Activated B cell treated with CpG ODN at 0.5 μM for 24 hours (primary cell): ENCODE measurements at regions of chr5 and their contacts with region 1.

Region 1: DNA sequence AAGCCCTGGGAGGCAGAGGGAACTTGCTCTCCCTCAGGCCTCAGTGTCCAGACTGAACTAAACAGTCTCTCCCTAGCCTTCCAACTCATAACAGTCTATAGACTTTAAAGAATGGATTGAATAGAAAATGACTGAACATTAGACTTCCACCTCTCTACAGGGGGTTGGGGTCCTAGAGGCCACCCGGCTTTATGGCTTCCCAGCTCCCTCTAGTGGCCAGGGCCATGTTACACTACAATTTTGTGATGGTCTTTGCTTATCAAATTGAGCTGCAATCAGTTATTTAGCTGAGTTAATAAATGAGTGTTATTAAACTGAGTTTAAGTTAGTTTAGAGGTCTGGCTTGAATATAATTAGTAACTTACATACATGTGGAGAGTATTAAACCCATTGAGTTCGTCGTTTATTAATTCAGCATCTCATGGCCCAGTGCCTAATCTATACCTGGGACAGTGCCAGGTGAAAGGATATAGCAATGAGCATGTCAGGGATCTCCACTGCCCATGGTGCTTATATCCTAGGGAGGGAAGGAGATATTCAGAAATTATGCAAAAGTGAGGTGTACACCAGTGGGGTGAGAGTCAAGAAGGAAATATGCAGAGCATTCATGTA is 105.2 kb downstream of the SH3TC2 start:
- DNase-seq: peak; percentile 27
- ATAC-seq: peak; percentile 66
- H3K4me3 Mint-ChIP-seq: no peak overlapping the region
- H3K27ac Mint-ChIP-seq: no peak overlapping the region
- H3K4me1 Mint-ChIP-seq: no peaks in the 10 kb centered on the region
- H3K27me3 Mint-ChIP-seq: peaks cover 2% of the 10 kb centered on the region
- CTCF ChIP-seq: no peak

Region 2: DNA sequence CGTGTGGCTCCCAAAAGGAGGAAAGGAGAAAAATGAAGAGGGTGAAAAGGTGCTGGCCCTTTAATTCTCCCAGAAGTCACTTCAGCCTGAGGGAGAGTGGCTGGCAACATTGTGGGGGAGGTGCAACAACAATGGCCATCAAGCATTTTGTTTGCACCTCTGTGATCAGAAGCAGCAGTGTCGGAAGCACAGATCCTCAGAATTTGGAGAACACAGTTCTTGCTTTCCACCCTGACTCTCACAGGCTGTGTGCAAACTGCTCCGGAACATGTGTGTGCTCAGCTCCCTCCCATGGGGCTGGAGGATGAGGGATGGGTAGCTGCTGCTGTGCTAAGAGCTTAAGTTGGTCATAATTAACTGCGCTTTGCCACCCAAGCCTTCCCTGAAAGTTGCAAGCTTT is 1574.9 kb before region 1 on chr5:
- CTCF ChIA-PET with region 1: no interaction called
- POLR2A ChIA-PET with region 1: no interaction called
- intact Hi-C with region 1: no loop called
- DNase-seq: no peak
- ATAC-seq: no peak
- H3K4me3 Mint-ChIP-seq: no peak overlapping the region
- H3K27ac Mint-ChIP-seq: no peak overlapping the region
- H3K4me1 Mint-ChIP-seq: no peaks in the 10 kb centered on the region
- H3K27me3 Mint-ChIP-seq: no peaks in the 10 kb centered on the region
- CTCF ChIP-seq: no peak

Region 3: GRCh38 chr5:148740966-148741742 is 216.5 kb before region 1 on chr5:
- CTCF ChIA-PET with region 1: interaction called, 548 read pairs
- POLR2A ChIA-PET with region 1: interaction called, 3 read pairs
- intact Hi-C with region 1: loop called (anchors 1 kb)
- DNase-seq: no peak
- ATAC-seq: no peak
- H3K4me3 Mint-ChIP-seq: no peak overlapping the region
- H3K27ac Mint-ChIP-seq: no peak overlapping the region
- H3K4me1 Mint-ChIP-seq: peaks cover 10% of the 10 kb centered on the region
- H3K27me3 Mint-ChIP-seq: no peaks in the 10 kb centered on the region
- CTCF ChIP-seq: peak; percentile 55

Region 4: GRCh38 chr5:148805326-148806290 is 152.1 kb before region 1 on chr5:
- CTCF ChIA-PET with region 1: interaction called, 10 read pairs
- POLR2A ChIA-PET with region 1: no interaction called
- intact Hi-C with region 1: loop called (anchors 5 kb)
- DNase-seq: no peak
- ATAC-seq: peak; percentile 28
- H3K4me3 Mint-ChIP-seq: peak overlapping the region; percentile 47
- H3K27ac Mint-ChIP-seq: peak overlapping the region; percentile 88
- H3K4me1 Mint-ChIP-seq: peaks cover 66% of the 10 kb centered on the region
- H3K27me3 Mint-ChIP-seq: no peaks in the 10 kb centered on the region
- CTCF ChIP-seq: no peak

Region 5: DNA sequence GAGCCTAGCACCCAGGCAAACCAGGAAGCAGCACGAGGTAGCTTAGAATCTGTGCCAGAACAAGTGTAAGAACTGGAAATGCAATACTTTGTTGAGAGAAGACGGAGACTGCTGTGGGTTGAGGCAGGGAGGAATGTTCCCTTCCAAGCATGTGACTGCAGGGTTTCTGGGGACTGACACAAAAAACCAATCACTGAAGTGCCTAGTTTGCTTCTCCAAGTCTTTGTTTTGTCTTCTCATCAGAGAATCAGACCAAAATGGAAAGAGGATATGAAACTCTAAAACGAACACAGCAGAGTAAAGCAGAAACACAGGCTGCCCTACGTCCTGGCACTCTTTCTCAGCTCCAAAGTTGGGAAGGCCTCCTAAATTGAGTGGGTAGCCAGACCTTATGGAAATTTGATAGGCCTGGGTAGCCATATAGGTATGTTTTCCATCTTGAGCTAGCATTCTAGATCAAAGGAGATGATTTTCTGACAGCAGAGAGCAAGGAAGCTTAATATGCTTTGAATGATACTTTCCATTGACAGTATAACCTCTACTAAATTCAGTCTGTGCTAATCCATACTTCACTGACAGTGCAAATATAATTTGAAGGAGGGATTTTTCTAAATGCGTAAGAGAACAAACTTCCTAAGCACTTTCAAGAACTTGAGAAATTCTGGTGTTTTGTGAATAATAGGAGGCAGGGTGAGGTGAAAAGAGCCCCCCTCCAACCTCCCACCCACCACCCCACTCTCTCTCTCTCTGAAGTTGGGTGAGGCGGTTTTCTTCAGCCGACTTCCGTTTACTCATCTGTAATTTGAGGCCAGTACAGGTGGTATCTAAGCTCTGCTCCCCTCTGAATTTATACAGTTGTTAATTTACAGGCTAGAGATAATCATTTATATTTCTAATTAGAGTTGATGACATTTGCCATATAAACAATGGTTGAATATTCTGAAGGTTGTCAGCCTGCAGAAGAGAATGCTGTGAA is 125.8 kb before region 1 on chr5:
- CTCF ChIA-PET with region 1: interaction called, 34 read pairs
- POLR2A ChIA-PET with region 1: interaction called, 5 read pairs
- intact Hi-C with region 1: no loop called
- DNase-seq: no peak
- ATAC-seq: peak; percentile 70
- H3K4me3 Mint-ChIP-seq: peak overlapping the region; percentile 76
- H3K27ac Mint-ChIP-seq: peak overlapping the region; percentile 98
- H3K4me1 Mint-ChIP-seq: peaks cover 97% of the 10 kb centered on the region
- H3K27me3 Mint-ChIP-seq: no peaks in the 10 kb centered on the region
- CTCF ChIP-seq: no peak

Region 6: GRCh38 chr5:148998174-148998797 is 40.6 kb after region 1 on chr5:
- CTCF ChIA-PET with region 1: interaction called, 4 read pairs
- POLR2A ChIA-PET with region 1: no interaction called
- intact Hi-C with region 1: loop called (anchors 1 kb)
- DNase-seq: no peak
- ATAC-seq: peak; percentile 52
- H3K4me3 Mint-ChIP-seq: no peak overlapping the region
- H3K27ac Mint-ChIP-seq: no peak overlapping the region
- H3K4me1 Mint-ChIP-seq: no peaks in the 10 kb centered on the region
- H3K27me3 Mint-ChIP-seq: peaks cover 23% of the 10 kb centered on the region
- CTCF ChIP-seq: no peak

Region 7: GRCh38 chr5:149185067-149185466 is 227.4 kb after region 1 on chr5:
- CTCF ChIA-PET with region 1: no interaction called
- POLR2A ChIA-PET with region 1: no interaction called
- intact Hi-C with region 1: no loop called
- DNase-seq: no peak
- ATAC-seq: no peak
- H3K4me3 Mint-ChIP-seq: no peak overlapping the region
- H3K27ac Mint-ChIP-seq: no peak overlapping the region
- H3K4me1 Mint-ChIP-seq: no peaks in the 10 kb centered on the region
- H3K27me3 Mint-ChIP-seq: peaks cover 33% of the 10 kb centered on the region
- CTCF ChIP-seq: no peak